Activated T-helper 1 cell treated with anti-CD3 and anti-CD28 coated beads, Interleukin-12 subunit alpha, Interleukin-12 subunit beta, Interleukin-2, Interleukin-4 antibody, amounts not matched to agents 30 ng/mL and 10 ng/mL and 1 ng/mL, durations not matched to agents 14 hours and 24 hours and 36 hours (primary cell): ENCODE measurements at regions of chr6 and their contacts with region 1.

Region 1: GRCh38 chr6:149147938-149148718 is 169.4 kb upstream of the TAB2 start:
- DNase-seq: peak; percentile 49
- H3K4me3 Mint-ChIP-seq: peak overlapping the region; percentile 34
- H3K27ac Mint-ChIP-seq: peak overlapping the region; percentile 96
- H3K4me1 Mint-ChIP-seq: peaks cover 89% of the 10 kb centered on the region
- H3K27me3 Mint-ChIP-seq: no peaks in the 10 kb centered on the region

Region 2: GRCh38 chr6:149129371-149130077 is 18.6 kb before region 1 on chr6:
- intact Hi-C with region 1: loop called (anchors 2 kb)
- DNase-seq: no peak
- H3K4me3 Mint-ChIP-seq: no peak overlapping the region
- H3K27ac Mint-ChIP-seq: peak overlapping the region; percentile 92
- H3K4me1 Mint-ChIP-seq: peaks cover 4% of the 10 kb centered on the region
- H3K27me3 Mint-ChIP-seq: no peaks in the 10 kb centered on the region

Region 3: DNA sequence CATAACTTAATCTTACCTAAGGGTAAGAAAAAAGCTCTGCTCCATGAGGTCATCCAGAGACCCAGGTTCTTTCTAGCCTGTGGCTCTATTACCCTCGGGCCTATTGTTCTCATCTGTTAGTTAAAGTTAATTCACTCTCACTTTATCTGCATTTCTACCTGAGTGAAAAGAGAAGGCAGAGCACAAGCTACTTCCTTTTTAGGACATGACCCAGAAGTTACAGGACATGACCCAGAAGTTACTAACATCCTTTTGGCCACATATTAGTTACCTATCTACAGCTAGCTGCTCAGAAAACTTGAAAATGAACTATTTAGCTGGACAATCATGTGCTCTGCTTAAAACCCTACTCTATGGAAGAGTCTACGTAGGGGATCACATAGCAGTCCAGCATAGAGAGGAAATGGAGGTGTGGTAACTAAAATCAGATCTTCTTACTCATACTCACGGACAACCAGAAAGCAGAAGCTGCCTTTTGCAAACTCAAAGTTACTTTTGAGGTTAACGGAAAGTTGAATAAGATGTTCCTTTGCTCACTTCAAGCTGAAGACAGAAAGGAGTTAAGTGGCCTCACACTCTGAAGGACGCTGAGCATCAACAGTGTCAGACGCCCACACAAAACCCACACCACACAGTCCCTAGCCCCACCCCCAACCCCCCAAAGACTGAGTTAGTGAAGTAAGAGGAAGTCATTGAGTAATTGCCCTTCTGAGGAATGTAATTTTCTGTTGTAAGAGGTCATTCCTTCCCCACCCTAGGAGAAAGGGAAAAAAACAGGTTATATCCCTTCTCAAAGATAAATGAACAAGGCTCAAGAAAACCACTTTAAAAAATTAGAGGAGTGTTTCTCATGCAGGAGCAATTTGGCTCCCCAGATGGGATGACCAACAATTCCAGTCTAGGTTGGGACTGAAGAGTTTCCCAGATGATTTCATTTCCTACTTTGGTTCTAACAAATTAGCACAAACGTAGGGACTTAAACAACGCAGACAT is 123.5 kb after region 1 on chr6:
- intact Hi-C with region 1: loop called (anchors 2 kb)
- DNase-seq: no peak
- H3K4me3 Mint-ChIP-seq: peak overlapping the region; percentile 62
- H3K27ac Mint-ChIP-seq: peak overlapping the region; percentile 94
- H3K4me1 Mint-ChIP-seq: peaks cover 56% of the 10 kb centered on the region
- H3K27me3 Mint-ChIP-seq: no peaks in the 10 kb centered on the region

Region 4: GRCh38 chr6:149335924-149336608 is 187.9 kb after region 1 on chr6:
- intact Hi-C with region 1: loop called (anchors 1 kb)
- DNase-seq: peak; percentile 22
- H3K4me3 Mint-ChIP-seq: peak overlapping the region; percentile 76
- H3K27ac Mint-ChIP-seq: peak overlapping the region; percentile 93
- H3K4me1 Mint-ChIP-seq: peaks cover 94% of the 10 kb centered on the region
- H3K27me3 Mint-ChIP-seq: no peaks in the 10 kb centered on the region